Dorsolateral prefrontal cortex (tissue), 120 donors: ENCODE measurements at regions of chr7 and their contacts with region 1.

Region 1: GRCh38 chr7:101969997-101970585 is 152.7 kb downstream of the CUX1 start:
- DNase-seq: no peak
- H3K4me3 ChIP-seq: no peak overlapping the region
- H3K27ac ChIP-seq: no peak overlapping the region
- H3K27me3 ChIP-seq: no peaks in the 10 kb centered on the region
- CTCF ChIP-seq: no peak

Region 2: GRCh38 chr7:101815835-101816493 is 154.1 kb before region 1 on chr7:
- intact Hi-C with region 1: no loop called
- DNase-seq: peak; percentile 37 to 72 (median 55)
- H3K4me3 ChIP-seq: peak overlapping the region in 56 of 59 donors; percentile 41 to 89 (median 70)
- H3K27ac ChIP-seq: peak overlapping the region in 42 of 59 donors; percentile 24 to 92 (median 68)
- H3K27me3 ChIP-seq: no peaks in the 10 kb centered on the region
- CTCF ChIP-seq: peak in 23 of 56 donors; percentile 1 to 42 (median 16)

Region 3: DNA sequence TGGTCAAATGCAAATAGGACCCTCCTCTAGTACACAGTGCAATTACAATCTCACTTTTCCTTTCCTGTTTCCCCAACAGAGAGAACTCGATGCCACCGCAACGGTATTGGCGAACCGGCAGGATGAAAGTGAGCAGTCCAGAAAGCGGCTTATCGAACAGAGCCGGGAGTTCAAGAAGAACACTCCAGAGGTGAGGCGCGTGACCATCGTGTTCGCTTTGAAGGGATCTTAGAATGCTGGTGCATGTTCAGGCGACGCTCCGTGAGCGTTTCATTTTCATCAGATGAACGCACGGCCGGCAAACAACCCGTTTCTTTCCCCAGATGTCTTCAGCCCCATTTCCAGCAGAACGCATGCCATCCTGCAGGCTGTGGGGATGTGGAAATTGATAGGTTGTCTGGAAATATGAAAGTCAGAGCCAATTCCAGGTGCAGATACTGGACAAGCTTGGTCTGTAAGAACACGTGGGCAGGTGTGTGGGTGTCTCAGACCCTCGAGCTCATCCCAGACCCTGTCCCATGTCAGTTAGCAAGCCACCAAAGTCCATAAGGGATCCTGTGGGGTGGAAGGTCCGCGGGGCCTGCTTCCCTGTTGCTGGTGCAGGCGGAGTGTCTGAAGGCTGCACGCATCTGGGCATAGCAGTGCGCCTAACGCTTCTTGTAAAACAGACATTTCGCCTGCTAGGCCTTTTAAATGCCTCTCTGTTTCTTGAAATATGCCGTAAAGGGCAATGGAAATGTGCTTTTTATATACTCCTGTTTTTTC is 53.9 kb before region 1 on chr7:
- intact Hi-C with region 1: loop called in 1 of 2 experiments (anchors 2 kb)
- DNase-seq: peak in 3 of 10 donors; percentile 13 to 30 (median 25)
- H3K4me3 ChIP-seq: no peak overlapping the region
- H3K27ac ChIP-seq: peak overlapping the region in 1 of 59 donors; percentile 75
- H3K27me3 ChIP-seq: no peaks in the 10 kb centered on the region
- CTCF ChIP-seq: no peak